WTC11 (cell line): ENCODE measurements at regions of chr20 and their contacts with region 1.

Region 1: GRCh38 chr20:34558320-34559218 is at the start of gene MAP1LC3A:
- DNase-seq: peak; percentile 95
- ATAC-seq: peak; percentile 75
- H3K4me3 Mint-ChIP-seq: peak within 1 kb of the TSS; percentile 75
- H3K27ac Mint-ChIP-seq: peak within 1 kb of the TSS; percentile 44
- H3K4me1 Mint-ChIP-seq: peaks cover 4% of the 10 kb centered on the region
- H3K27me3 Mint-ChIP-seq: peaks cover 7% of the 10 kb centered on the region
- CTCF ChIP-seq: no peak
- total RNA-seq, gene MAP1LC3A: 7.5 to 12.1 TPM (median 11.3 TPM) in 3 replicates

Region 2: GRCh38 chr20:34538671-34539123 is 19.9 kb before region 1 on chr20:
- CTCF ChIA-PET with region 1: interaction called, 12 read pairs
- POLR2A ChIA-PET with region 1: no interaction called
- DNase-seq: peak; percentile 72
- ATAC-seq: peak; percentile 70
- H3K4me3 Mint-ChIP-seq: no peak overlapping the region
- H3K27ac Mint-ChIP-seq: peak overlapping the region; percentile 49; the same call in 1 of the 2 replicates
- H3K4me1 Mint-ChIP-seq: peaks cover under 1% of the 10 kb centered on the region; the same call in 1 of the 2 replicates
- H3K27me3 Mint-ChIP-seq: no peaks in the 10 kb centered on the region
- CTCF ChIP-seq: peak; percentile 60

Region 3: GRCh38 chr20:34544109-34544793 is 14.3 kb before region 1 on chr20:
- CTCF ChIA-PET with region 1: interaction called, 10 read pairs
- POLR2A ChIA-PET with region 1: interaction called, 6 read pairs
- DNase-seq: peak; percentile 48
- ATAC-seq: peak; percentile 89
- H3K4me3 Mint-ChIP-seq: peak overlapping the region; percentile 56
- H3K27ac Mint-ChIP-seq: no peak overlapping the region; the same call in 1 of the 2 replicates
- H3K4me1 Mint-ChIP-seq: peaks cover 13% of the 10 kb centered on the region
- H3K27me3 Mint-ChIP-seq: 0 out of 2 replicates have a peak, but pooled peaks cover 3% of the 10 kb centered on the region
- CTCF ChIP-seq: no peak